Right ventricle myocardium inferior (tissue), 1 donor: ENCODE measurements at regions of chr18 and their contacts with region 1.

Region 1: DNA sequence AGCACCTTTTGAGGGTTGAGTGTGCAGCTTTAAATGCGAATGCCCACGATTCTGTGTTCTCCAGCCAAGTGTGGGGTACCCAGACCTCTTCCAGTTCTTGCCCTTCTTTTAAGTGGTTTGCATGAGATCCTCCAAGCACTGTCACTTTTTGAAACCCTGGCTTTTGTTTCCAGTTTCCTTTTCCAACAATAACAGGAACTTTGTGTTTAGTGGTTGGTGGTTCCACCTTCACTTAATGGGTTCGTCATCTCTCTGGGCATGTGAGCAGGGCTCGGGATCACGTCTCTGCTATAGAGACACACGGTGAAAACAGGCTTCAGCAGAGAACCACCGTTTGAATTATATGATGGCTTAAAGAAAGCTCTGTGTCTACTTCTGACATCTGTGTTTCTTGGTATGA is 197.6 kb downstream of the LDLRAD4 start:
- DNase-seq: no peak
- ATAC-seq: no peak

Region 2: DNA sequence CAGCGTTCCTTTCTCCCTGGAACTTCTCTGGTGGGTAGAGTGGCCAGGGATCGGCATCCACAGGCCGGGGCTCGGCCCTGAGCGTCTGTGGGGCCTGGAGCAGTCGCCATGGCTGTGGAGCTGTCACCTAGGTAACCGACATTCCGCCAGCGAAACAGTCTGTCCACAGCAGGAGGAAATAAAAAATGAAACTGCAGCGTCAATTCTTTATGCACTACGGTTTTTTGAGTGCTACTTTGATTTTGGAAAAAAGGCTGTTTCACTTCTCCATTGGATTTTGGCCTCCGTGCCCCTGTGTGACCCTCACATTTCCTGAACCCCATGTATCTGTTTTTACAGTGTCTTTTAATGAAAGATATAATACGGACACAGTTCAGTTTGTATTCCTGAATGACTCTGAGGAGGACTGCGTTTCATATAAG is 34.3 kb before region 1 on chr18:
- intact Hi-C with region 1: loop called (anchors 5 kb)
- DNase-seq: peak; percentile 85
- ATAC-seq: peak; percentile 87

Region 3: DNA sequence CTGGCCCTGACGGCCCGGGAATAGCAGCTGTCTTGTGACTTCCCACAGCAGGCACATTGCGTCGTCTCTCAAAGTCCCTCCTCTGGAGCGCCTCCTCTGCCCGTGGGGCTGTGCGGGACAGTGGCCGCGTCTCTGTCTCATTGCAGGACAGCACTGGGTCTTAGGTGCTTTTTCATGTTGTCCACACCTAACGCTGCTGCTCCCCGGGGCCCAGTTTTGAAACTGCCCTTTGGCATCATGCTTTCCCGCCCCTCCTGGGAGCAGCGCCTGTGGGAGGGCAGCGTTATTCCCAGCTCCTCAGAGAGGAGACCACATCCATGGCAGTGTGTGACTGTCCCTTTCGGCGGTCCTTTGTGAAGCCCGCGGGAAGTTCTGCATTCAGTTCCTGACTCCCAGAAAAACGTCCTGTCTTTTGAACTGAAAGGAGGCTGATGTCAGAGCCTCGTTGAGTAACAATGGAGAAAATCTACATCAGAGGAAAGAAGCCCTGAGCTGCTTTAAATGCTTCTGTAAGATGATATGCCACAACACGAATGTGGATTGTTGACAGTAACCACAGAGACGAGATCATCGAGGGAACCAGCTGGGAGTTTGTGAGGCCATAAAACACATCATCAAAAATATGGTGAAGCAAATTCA is 84.1 kb after region 1 on chr18:
- intact Hi-C with region 1: loop called (anchors 5 kb)
- DNase-seq: no peak
- ATAC-seq: peak; percentile 82